ENCODE measurements at regions of chr5 and their contacts with region 1.

Region 1: DNA sequence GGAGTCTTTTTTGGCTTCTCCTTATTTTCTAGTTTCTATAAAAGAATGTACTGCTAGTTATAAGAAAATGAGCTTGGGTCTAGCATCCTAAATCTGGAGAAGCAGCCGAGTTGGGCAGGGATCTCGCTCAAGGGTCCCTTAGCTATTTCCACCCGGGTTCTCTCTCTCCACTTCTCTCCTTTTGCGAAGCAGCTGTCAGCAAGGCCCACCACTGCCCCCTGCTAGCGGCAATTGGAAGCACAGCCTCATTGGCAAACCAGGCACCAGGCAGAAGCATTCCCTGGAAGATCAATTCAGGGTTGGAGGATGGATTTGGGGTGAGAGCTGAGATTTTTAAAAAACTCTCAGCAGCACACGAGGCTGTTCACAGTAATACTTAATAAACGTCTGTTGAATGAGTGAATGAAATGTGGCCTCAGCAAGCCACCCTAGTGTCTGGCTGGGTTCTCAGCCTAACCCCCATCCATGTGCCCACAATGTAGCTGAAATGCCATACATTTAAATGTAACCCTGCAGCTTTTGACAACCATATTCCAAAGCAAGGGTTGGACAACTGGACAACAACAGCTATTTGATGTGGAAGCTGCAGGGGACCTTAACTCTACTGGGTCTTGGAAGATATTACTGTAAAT is 34.6 kb upstream of the TNIP1 start:
- DNase-seq: no peak
- H3K4me3 ChIP-seq: no peak overlapping the region
- CTCF ChIP-seq: peak; percentile 91

Region 2: DNA sequence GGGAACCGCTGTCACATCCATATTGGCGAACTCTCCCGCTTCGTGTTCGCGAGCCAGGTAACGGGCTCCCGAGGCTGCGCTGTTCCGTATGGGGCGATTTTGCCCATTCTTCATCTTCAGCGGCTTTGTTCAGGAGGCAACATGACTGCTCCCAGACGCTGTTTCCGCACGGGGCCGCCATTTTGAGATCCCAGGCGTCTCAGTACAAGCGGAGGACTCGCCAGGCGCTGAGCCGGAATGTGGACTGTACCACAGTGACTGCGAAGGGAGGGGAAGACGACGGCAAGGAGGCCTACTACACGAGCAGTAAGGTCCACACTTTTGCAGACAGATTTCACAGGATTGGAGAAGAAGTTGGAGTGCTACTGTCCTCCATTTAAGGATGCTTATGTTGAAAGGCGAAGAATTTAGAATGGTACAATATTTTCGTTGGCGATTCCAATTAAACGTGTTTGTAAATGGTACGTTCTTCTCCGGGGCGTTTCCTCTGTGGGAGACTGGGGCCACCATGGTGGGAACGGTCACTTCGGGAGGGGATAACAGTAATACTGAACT is 169.0 kb before region 1 on chr5:
- CTCF ChIA-PET with region 1: no interaction called
- POLR2A ChIA-PET with region 1: no interaction called
- DNase-seq: no peak
- H3K4me3 ChIP-seq: peak overlapping the region; percentile 55
- CTCF ChIP-seq: no peak

Region 3: GRCh38 chr5:150960791-150961396 is 154.5 kb before region 1 on chr5:
- CTCF ChIA-PET with region 1: no interaction called
- POLR2A ChIA-PET with region 1: no interaction called
- DNase-seq: no peak
- H3K4me3 ChIP-seq: no peak overlapping the region
- CTCF ChIP-seq: no peak

Region 4: DNA sequence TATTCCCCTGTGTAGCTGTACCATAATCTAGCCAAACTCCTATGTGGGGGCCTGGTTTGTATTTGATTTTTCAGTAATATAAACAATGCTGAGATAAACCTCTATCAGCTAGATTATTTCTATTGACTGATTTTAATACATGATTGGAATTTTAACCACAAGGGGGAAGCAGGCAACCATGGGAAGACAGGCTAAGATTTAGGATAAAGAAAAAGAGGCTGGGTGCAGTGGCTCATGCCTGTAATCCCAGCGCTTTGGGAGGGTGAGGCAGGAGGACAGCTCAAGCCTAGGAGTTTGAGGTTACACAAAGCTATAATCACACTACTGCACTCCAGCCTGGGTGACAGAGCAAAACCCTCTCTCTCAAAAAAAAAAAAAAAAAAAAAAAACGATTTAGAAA is 113.1 kb before region 1 on chr5:
- CTCF ChIA-PET with region 1: interaction called, 102 read pairs
- POLR2A ChIA-PET with region 1: no interaction called
- DNase-seq: no peak
- H3K4me3 ChIP-seq: no peak overlapping the region
- CTCF ChIP-seq: peak; percentile 2

Region 5: DNA sequence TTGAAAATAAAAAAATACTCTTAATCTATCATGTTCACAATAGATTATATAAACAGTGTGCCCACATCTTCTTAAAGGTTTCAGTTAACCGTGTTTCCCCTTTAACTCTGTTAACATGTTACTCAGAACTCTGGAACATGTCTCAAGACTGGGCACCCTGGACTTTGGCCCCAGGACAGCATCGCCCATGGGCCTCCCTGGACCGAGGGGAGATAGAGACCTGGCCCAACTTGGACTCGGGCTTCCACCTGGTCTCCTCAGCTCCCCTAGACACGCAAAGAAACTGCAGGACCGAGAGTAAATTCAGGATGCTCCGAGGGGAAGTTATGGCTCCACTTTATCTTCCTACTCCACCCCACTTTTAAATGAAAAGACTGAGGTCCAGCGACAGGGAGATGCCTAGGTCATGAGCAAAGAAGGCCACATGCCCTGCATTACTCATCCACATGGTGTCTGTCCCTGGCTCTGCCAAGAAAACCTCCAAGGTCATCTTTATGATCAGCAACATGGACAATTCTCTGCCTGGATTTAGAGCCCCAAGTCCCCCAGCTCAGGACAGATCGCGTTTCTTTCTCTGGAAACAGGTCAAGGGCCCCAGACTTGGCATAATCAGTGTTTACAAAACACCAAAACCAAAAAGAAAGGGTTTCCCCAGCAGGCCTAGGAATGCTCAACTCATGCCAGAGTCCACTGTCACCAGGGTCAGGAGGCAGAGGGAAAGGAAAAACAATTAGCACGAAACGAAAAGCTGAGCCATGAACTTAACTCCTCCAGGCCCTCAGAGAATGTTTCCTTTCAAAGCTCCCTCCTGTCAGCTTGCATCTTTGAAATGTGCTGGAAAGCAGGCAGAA is 77.6 kb before region 1 on chr5:
- CTCF ChIA-PET with region 1: interaction called, 73 read pairs
- POLR2A ChIA-PET with region 1: no interaction called
- DNase-seq: no peak
- H3K4me3 ChIP-seq: no peak overlapping the region
- CTCF ChIP-seq: no peak

Region 6: GRCh38 chr5:151093476-151093889 is 21.9 kb before region 1 on chr5:
- CTCF ChIA-PET with region 1: interaction called, 31 read pairs
- POLR2A ChIA-PET with region 1: interaction called, 3 read pairs
- DNase-seq: peak; percentile 91
- H3K4me3 ChIP-seq: no peak overlapping the region
- CTCF ChIP-seq: no peak

Region 7: DNA sequence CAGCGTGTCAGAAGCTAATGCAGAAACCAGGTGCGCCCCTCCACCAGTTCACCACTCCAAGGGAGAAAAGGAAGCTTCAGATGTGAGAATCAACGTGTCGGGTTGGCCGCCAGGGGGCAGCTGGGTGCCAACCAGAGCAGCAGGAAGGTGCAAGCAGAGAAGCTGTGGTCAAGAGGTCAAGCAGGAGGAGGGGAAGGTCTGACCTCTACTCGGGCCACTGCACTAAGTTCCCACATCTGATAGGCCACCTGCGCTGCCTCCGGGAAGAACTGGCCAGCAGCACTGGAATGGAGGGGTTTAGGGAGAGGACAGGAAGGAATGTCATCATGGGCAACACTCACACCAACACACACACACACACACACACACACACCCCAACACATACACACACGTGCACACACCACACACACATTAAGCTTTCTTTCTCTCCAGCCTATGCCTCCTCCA is 10.8 kb after region 1 on chr5:
- CTCF ChIA-PET with region 1: interaction called, 256 read pairs
- POLR2A ChIA-PET with region 1: interaction called, 4 read pairs
- DNase-seq: no peak
- H3K4me3 ChIP-seq: no peak overlapping the region
- CTCF ChIP-seq: peak; percentile 85

Region 8: GRCh38 chr5:151150471-151151262 is 35.3 kb after region 1 on chr5:
- CTCF ChIA-PET with region 1: interaction called, 208 read pairs
- POLR2A ChIA-PET with region 1: interaction called, 3 read pairs
- DNase-seq: no peak
- H3K4me3 ChIP-seq: no peak overlapping the region
- CTCF ChIP-seq: no peak

Region 9: GRCh38 chr5:151164686-151165392 is 49.4 kb after region 1 on chr5:
- CTCF ChIA-PET with region 1: interaction called, 126 read pairs
- POLR2A ChIA-PET with region 1: no interaction called
- DNase-seq: no peak
- H3K4me3 ChIP-seq: no peak overlapping the region
- CTCF ChIP-seq: peak; percentile 87

Measured in AG04449 (cell line).